ENCODE measurements at regions of chr5 and their contacts with region 1.

Region 1: DNA sequence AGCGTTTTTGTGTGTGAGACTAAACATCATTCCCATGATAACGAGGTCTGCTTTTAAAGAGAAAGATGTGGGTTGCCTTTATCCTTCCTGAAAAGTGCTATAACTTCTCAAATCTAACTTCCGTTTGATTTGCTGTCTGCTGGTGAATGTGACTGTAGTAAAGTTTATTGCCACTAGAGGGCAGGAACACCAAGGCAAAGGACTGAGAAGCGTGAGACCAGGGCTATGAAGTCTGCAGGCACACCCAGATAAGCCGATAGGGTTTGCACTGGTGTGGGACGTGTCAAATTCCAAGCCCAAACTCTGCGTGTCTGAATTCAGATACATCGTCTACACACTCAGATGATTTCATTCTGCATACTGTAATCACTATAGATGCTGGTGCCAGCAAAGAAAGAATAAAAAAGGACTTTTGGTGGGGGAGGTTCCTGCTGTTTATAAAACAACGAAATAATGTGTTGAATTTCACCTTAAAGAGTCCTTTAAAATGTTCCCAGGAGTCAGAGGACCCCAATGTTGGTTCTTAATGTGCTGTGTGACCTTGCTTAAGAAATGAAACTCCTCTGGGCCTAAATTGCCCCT is 87.2 kb downstream of the PTTG1 start:
- DNase-seq: peak; percentile 80
- H3K4me3 ChIP-seq: no peak overlapping the region
- H3K27ac ChIP-seq: no peak overlapping the region
- H3K4me1 ChIP-seq: peaks cover 15% of the 10 kb centered on the region
- CTCF ChIP-seq: peak; percentile 92

Region 2: GRCh38 chr5:160467555-160468362 is 41.1 kb before region 1 on chr5:
- CTCF ChIA-PET with region 1: no interaction called
- POLR2A ChIA-PET with region 1: interaction called, 3 read pairs
- intact Hi-C with region 1: loop called (anchors 2 kb)
- DNase-seq: peak; percentile 83
- H3K4me3 ChIP-seq: peak overlapping the region; percentile 68
- H3K27ac ChIP-seq: peak overlapping the region; percentile 72
- H3K4me1 ChIP-seq: peaks cover 81% of the 10 kb centered on the region
- CTCF ChIP-seq: no peak

Region 3: GRCh38 chr5:161544350-161544765 is 1035.5 kb after region 1 on chr5:
- CTCF ChIA-PET with region 1: no interaction called
- POLR2A ChIA-PET with region 1: no interaction called
- intact Hi-C with region 1: loop called (anchors 10 kb)
- DNase-seq: peak; percentile 76
- H3K4me3 ChIP-seq: peak overlapping the region; percentile 92
- H3K27ac ChIP-seq: no peak overlapping the region
- H3K4me1 ChIP-seq: peaks cover 13% of the 10 kb centered on the region
- CTCF ChIP-seq: peak; percentile 95

Measured in OCI-LY7 (cell line).